ENCODE measurements at regions of chr7 and their contacts with region 1.

Region 1: GRCh38 chr7:56092789-56093531 is at the start of gene PHKG1:
- DNase-seq: peak; percentile 33 to 67 (median 48)
- ATAC-seq: peak; percentile 88
- H3K4me3 ChIP-seq: no peak within 1 kb of the TSS
- H3K27ac ChIP-seq: no peak within 1 kb of the TSS
- H3K4me1 ChIP-seq: 0 out of 5 replicates have a peak, but pooled peaks cover 0 to 5% of the 10 kb centered on the region in 2 experiments
- H3K27me3 ChIP-seq: no peaks in the 10 kb centered on the region
- CTCF ChIP-seq: peak; percentile 54 to 59 (median 56); a peak in 5 of 6 replicates
- EP300 ChIP-seq: no peak
- POLR2A ChIP-seq: no peak
- RAD21 ChIP-seq: peak; percentile 27 to 66; a peak in 3 of 4 replicates
- polyA plus RNA-seq, gene PHKG1: 0.10 to 0.11 TPM

Region 2: DNA sequence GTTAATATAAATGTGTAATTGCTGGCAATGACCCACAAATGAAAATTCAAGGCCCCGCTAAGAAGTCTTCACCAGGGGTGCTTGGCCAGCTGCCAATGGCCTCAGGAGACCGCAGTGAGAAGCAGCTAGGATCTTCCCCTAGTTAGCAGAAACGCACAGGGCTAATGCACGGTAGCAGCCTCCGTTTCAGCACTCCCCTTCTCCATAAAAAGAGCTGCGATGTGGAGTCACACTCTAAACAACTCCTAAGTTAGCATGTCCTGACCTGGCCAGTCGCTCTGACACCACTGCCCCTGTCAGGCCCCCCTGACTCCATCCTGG is 369.4 kb before region 1 on chr7:
- CTCF ChIA-PET with region 1: no interaction called
- POLR2A ChIA-PET with region 1: no interaction called
- in situ Hi-C with region 1: no loop called
- intact Hi-C with region 1: no loop called
- DNase-seq: no peak
- ATAC-seq: no peak
- H3K4me3 ChIP-seq: no peak overlapping the region
- H3K27ac ChIP-seq: no peak overlapping the region
- H3K4me1 ChIP-seq: no peaks in the 10 kb centered on the region
- H3K27me3 ChIP-seq: no peaks in the 10 kb centered on the region
- CTCF ChIP-seq: no peak
- EP300 ChIP-seq: no peak
- POLR2A ChIP-seq: no peak
- RAD21 ChIP-seq: no peak

Region 3: GRCh38 chr7:56033671-56034432 is 59.1 kb before region 1 on chr7:
- CTCF ChIA-PET with region 1: no interaction called
- POLR2A ChIA-PET with region 1: no interaction called
- in situ Hi-C with region 1: no loop called
- intact Hi-C with region 1: no loop called
- DNase-seq: peak; percentile 64 to 84 (median 70)
- ATAC-seq: peak; percentile 95
- H3K4me3 ChIP-seq: peak overlapping the region; percentile 55
- H3K27ac ChIP-seq: peak overlapping the region; percentile 48; the same call in 2 of the 3 replicates
- H3K4me1 ChIP-seq: peaks cover 3 to 11% of the 10 kb centered on the region in 2 experiments; a peak in 3 of 5 replicates
- H3K27me3 ChIP-seq: no peaks in the 10 kb centered on the region
- CTCF ChIP-seq: peak; percentile 37 to 59 (median 46); a peak in 5 of 6 replicates
- EP300 ChIP-seq: peak; percentile 35; the same call in 1 of the 2 replicates
- POLR2A ChIP-seq: no peak
- RAD21 ChIP-seq: peak; percentile 44 to 47

Region 4: GRCh38 chr7:56106108-56107073 is 13.4 kb after region 1 on chr7 and contains the start of gene CHCHD2:
- CTCF ChIA-PET with region 1: no interaction called
- POLR2A ChIA-PET with region 1: interaction called, 12 read pairs
- in situ Hi-C with region 1: no loop called
- intact Hi-C with region 1: no loop called
- DNase-seq: peak; percentile 92 to 99 (median 94)
- ATAC-seq: peak; percentile 96
- H3K4me3 ChIP-seq: peak within 1 kb of the TSS; percentile 84
- H3K27ac ChIP-seq: peak within 1 kb of the TSS; percentile 99
- H3K4me1 ChIP-seq: peaks cover 8 to 9% of the 10 kb centered on the region in 2 experiments; a peak in 4 of 5 replicates
- H3K27me3 ChIP-seq: no peaks in the 10 kb centered on the region
- CTCF ChIP-seq: no peak
- EP300 ChIP-seq: peak; percentile 37; the same call in 1 of the 2 replicates
- POLR2A ChIP-seq: peak; percentile 98
- RAD21 ChIP-seq: no peak
- polyA plus RNA-seq, gene CHCHD2: 145 to 350 TPM